ENCODE measurements at regions of chr2 and their contacts with region 1.

Region 1: DNA sequence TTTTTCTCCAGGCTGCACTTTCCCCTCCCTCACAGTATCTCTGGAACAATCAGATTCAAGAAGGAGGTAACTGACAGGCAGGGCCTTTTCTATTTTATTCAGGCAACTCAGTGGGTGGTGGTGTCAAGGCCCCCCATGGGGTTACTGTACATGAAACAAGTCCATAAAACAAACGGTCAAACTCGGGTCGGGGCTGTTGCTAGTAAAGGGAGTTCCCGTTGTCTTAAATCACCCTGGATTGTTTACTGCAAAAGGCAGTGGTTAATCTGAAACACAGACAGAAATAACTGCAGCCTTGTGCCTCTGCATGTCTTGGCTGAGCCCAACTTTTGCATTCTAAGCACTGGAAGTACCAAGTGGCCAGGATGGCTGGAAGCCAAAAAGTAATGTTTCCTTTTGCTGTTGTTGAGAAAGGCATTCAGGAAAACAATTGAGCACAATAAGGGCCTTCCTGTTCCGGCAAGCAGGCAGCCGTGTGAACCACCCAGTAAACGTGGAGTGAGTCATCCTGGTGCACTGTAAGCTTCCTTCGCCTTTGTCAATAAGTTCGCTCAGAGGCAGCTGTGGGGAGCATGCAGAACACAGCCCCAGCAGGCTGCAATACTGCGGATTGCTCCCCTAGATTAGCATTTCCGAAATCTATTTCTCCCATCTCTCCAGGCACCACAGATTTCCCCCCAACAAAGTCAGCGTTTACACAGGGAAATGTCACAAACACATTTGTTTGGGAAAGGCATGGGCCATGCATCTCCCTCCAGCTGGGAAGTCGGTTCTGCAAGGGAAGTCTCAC is 149.6 kb downstream of the IRS1 start:
- DNase-seq: peak; percentile 98
- H3K4me3 ChIP-seq: no peak overlapping the region
- H3K27ac ChIP-seq: peak overlapping the region; percentile 92
- H3K4me1 ChIP-seq: peaks cover 45% of the 10 kb centered on the region
- H3K27me3 ChIP-seq: no peaks in the 10 kb centered on the region
- CTCF ChIP-seq: no peak

Region 2: DNA sequence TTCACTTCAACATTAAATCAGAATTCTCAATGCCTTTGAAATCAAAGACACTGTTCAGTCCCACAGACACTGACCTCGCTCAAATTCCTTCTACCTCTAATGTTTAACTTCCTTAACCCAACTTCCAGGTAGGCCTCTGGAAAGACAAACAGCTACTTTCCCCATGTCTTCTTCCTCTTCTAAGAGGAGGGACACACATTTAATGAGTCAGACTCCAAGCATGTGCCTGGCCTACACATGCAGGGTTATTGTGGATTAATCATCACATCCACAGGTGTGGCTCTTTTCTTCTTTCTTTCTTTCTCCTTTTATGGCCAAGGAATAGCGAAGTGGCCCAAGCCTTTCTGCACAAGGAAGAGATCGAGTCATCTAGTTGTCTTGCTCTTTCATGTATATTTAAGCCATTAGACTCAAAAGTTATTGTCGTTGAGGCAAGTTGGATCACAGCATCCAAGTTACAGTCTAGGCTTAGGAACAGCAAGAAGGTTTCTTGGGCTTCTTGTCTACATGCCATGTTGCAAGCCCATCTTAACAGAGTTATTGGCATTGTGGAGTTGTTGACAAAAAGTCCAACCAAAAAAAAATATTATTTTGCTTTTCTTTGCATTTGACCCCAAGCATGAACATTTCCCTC is 238.2 kb before region 1 on chr2:
- CTCF ChIA-PET with region 1: no interaction called
- dilution Hi-C with region 1: no loop called
- in situ Hi-C with region 1: no loop called
- intact Hi-C with region 1: loop called (anchors 5 kb)
- DNase-seq: peak; percentile 93
- H3K4me3 ChIP-seq: no peak overlapping the region
- H3K27ac ChIP-seq: peak overlapping the region; percentile 81
- H3K4me1 ChIP-seq: peaks cover 19% of the 10 kb centered on the region
- H3K27me3 ChIP-seq: no peaks in the 10 kb centered on the region
- CTCF ChIP-seq: no peak

Region 3: GRCh38 chr2:226583715-226584114 is 66.4 kb before region 1 on chr2:
- CTCF ChIA-PET with region 1: no interaction called
- dilution Hi-C with region 1: no loop called
- in situ Hi-C with region 1: no loop called
- intact Hi-C with region 1: loop called (anchors 5 kb)
- DNase-seq: peak; percentile 66
- H3K4me3 ChIP-seq: peak overlapping the region in 1 of 3 experiments; percentile 6
- H3K27ac ChIP-seq: peak overlapping the region; percentile 28
- H3K4me1 ChIP-seq: peaks cover 43% of the 10 kb centered on the region
- H3K27me3 ChIP-seq: no peaks in the 10 kb centered on the region
- CTCF ChIP-seq: no peak

Region 4: GRCh38 chr2:226760412-226761194 is 110.5 kb after region 1 on chr2:
- CTCF ChIA-PET with region 1: no interaction called
- dilution Hi-C with region 1: no loop called
- in situ Hi-C with region 1: no loop called
- intact Hi-C with region 1: loop called (anchors 5 kb)
- DNase-seq: peak; percentile 57
- H3K4me3 ChIP-seq: no peak overlapping the region
- H3K27ac ChIP-seq: no peak overlapping the region
- H3K4me1 ChIP-seq: peaks cover 51% of the 10 kb centered on the region
- H3K27me3 ChIP-seq: no peaks in the 10 kb centered on the region
- CTCF ChIP-seq: no peak